Common myeloid progenitor, CD34-positive (primary cell): ENCODE measurements at regions of chr13 and their contacts with region 1.

Region 1: DNA sequence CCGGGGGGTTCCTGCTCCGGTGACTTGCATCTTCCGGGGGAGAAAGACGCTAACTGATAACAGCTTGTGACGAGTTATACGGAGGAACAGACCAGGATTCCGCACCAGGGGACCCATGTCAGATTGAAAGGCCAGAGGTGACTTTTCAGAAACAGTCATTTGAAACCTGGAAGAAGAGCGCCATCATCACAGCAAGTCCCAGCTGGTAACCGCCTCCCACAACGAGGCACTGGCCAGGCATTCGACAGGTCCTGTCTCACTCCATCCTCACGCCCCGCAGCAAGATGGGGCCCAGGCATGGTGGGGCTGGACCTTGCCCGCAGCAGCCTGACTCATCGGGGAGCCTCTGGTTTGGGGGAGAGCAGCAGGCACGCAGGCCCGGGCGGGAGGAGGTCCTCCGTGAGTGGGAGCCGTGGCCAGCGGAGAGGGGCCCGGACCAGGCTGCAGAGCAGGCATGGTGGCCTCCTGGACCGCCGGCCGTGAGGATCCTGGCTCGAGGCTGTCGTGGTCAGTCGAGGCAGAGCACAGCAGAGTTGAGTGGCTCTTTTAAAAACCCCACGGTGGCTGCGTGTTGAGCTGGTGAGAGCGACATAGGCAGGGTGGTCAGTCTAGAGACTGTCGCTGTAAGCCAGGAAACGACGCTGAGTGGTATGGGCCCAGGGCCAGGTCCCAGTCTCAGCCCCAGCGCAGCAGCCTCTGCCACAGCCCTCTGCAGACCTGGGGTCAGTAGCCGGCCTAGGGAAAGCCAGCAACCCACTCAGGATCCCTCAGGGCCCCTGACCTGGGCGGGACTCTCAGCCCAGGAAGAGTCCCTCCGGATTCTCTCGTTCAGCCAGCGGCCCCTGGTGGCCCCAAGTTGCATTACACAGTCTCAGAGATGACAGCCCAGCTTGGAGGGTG is 94.9 kb upstream of the MCF2L start:
- DNase-seq: peak; percentile 74 to 83 (median 81)
- H3K4me3 ChIP-seq: peak overlapping the region in 5 of 7 experiments; percentile 11 to 68 (median 59)
- H3K27ac ChIP-seq: no peak overlapping the region
- H3K4me1 ChIP-seq: peaks cover 0 to 52% (median 32%) of the 10 kb centered on the region in 4 experiments
- H3K27me3 ChIP-seq: no peaks in the 10 kb centered on the region

Region 2: DNA sequence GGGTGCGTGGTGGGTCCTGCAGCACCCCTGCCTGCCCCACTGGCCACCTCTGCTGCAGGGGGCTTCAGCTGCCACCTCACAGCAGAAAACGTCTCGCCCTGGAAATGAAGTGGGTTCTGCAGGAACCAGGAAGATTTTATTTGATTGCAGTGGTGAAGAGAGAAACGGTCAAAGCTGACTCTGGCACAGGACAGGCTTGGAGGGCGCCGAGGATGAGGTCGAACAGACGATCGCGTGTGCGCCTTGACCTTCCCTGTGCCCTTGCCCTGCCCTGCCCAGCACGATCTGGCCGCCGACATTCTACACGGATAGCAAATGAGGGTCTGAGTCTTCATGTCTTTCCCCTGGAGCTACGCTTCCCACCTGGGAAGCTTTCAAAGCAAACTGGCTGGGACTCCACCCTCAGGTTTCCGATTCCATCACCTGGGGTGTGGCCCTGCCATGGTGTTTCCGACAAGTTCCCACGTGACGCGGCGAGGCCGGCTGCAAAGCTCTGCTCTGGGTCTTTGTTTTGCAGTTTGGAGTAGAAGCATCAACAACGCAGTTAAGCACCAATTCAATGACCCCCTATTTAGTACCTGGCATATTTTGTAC is 235.8 kb before region 1 on chr13:
- CTCF ChIA-PET with region 1: interaction called, 26 read pairs
- POLR2A ChIA-PET with region 1: interaction called, 3 read pairs
- DNase-seq: no peak
- H3K4me3 ChIP-seq: peak overlapping the region in 1 of 7 experiments; percentile 36
- H3K27ac ChIP-seq: no peak overlapping the region
- H3K4me1 ChIP-seq: peaks cover 0 to 18% (median 6%) of the 10 kb centered on the region in 4 experiments
- H3K27me3 ChIP-seq: peaks cover 0 to 44% (median 18%) of the 10 kb centered on the region in 5 experiments

Region 3: DNA sequence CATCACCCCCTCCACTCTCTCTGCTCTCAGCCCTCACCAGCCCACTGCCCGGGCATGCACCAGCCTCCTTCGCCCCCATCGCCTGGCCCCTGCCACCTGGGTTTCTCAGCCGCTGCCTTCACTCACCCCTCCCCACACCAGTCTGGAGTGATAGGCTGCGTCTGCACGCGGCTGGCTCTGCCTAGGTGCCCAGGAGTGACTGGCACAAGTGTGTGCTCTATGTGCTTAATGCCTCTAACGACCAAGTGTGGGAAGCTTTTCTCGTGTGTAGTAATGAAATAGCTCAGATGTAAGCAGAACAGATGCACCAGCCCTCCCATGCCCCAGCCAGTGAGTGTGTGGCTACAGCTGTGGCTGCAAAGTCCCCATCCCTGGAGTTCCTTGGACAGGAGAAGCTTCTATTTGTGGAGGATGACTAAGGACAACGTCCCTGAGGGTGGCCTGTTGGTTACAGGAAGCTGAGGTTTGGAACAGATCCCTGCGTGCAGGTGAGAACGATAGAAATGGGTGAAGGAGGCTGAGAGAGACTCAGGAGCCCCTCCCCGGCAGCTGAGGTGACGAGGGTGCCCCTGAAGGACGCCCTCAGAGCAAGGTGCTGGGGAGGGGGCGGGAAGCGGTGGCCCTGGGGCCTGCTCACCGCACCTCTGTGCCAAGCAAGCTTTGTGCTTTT is 148.6 kb before region 1 on chr13:
- CTCF ChIA-PET with region 1: no interaction called
- POLR2A ChIA-PET with region 1: no interaction called
- DNase-seq: peak; percentile 50 to 85 (median 82)
- H3K4me3 ChIP-seq: peak overlapping the region in 5 of 7 experiments; percentile 26 to 51 (median 48)
- H3K27ac ChIP-seq: no peak overlapping the region
- H3K4me1 ChIP-seq: peaks cover 4 to 38% (median 25%) of the 10 kb centered on the region in 4 experiments
- H3K27me3 ChIP-seq: no peaks in the 10 kb centered on the region

Region 4: DNA sequence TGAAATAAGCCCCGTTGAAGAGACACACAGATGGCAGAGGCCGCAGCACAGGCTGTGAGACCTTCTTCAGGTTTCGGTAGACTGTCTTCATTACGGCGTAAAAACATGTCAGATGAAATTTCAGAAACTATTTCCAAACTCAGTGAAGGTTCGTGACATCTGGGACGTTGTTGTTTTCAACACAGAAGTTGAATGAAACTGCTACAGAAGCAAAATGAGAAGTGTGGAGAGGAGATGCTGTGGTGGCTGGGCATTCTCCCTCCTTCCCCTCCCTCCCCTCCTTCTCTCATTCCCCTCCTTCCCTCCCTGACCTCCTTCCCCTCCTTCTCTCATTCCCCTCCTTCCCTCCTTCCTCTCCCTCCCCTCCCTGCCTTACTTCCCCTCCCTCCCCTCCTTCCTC is 70.7 kb before region 1 on chr13:
- CTCF ChIA-PET with region 1: no interaction called
- POLR2A ChIA-PET with region 1: no interaction called
- DNase-seq: peak in 1 of 3 donors; percentile 6
- H3K4me3 ChIP-seq: no peak overlapping the region
- H3K27ac ChIP-seq: no peak overlapping the region
- H3K4me1 ChIP-seq: peaks cover 0 to 10% (median 3%) of the 10 kb centered on the region in 4 experiments
- H3K27me3 ChIP-seq: no peaks in the 10 kb centered on the region

Region 5: DNA sequence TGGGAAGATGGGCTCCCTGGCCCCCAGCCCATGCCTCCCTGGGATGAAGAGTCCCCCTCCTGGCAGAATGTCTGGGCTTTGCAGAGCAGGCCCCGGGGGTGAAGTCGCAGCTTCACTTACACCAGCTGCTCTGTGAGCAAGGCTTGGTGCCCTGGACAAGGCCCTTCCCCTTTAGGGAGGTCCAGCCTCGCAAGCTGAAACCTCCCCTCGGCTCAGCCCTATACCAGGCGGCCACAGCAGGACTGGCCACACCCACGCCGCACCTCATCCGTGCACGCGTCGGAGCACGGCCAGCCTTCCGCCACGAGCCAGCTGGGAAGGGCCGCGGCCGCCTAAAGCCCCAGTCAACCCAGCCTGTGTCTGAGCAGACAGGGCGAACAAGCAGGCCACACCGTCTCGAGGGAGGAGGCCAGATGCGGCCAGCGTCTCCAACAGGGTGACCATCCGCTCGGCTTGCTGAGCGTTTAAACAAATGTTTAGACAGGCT is 11.7 kb after region 1 on chr13:
- CTCF ChIA-PET with region 1: interaction called, 18 read pairs
- POLR2A ChIA-PET with region 1: interaction called, 3 read pairs
- DNase-seq: peak in 2 of 3 donors; percentile 41 to 52
- H3K4me3 ChIP-seq: peak overlapping the region in 2 of 7 experiments; percentile 46 to 51
- H3K27ac ChIP-seq: no peak overlapping the region
- H3K4me1 ChIP-seq: peaks cover 0 to 9% (median 2%) of the 10 kb centered on the region in 4 experiments
- H3K27me3 ChIP-seq: peaks cover 0 to 3% (median 0%) of the 10 kb centered on the region in 5 experiments

Region 6: DNA sequence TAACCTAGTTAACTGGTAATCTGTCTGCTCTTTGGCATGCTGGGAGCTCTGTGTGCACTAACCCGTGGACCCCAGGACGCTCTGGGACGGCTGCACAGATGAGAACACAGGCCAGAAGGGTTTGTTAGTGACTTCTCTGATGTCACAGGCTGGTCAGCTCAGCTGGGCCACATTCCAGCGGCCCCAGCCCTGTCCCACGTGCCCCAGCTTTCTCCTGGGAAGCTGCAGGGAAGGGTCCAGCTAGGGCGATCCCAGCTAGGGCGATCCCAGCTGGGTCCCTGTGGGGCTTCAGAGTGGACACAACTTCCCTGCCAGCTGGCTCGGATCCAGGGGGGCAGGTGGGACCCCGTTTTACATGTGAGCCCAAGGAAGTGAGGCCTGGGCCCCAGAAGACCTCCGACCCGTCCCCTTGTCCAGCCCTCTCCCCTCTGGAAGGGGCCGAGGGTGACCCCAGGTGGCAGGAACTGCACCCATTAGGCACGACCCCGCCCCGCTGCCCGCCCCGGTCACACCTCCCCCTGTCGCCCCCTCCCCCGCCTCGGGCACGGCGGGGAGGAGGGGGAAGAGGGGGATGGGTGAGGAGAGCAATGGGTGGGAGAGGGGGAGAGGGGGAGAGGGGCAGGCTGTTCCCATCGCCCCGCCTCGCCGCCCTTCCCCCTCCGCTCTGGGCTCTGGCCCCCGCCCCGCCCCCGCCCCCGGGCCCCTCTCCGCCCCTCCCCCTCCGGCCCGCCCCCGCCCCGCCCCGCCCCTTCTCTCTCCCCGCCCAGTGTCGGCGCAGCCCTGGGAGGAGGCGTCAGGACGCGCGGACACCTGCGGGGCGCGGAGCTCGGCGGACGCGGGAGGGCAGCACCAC is 19.7 kb after region 1 on chr13:
- CTCF ChIA-PET with region 1: interaction called, 11 read pairs
- POLR2A ChIA-PET with region 1: no interaction called
- DNase-seq: peak; percentile 17 to 53 (median 42)
- H3K4me3 ChIP-seq: peak overlapping the region in 5 of 7 experiments; percentile 19 to 70 (median 49)
- H3K27ac ChIP-seq: no peak overlapping the region
- H3K4me1 ChIP-seq: peaks cover 0 to 31% (median 28%) of the 10 kb centered on the region in 4 experiments
- H3K27me3 ChIP-seq: peaks cover 0 to 20% (median 6%) of the 10 kb centered on the region in 5 experiments

Region 7: GRCh38 chr13:113001241-113002140 is 127.4 kb after region 1 on chr13:
- CTCF ChIA-PET with region 1: no interaction called
- POLR2A ChIA-PET with region 1: no interaction called
- DNase-seq: peak; percentile 50 to 92 (median 88)
- H3K4me3 ChIP-seq: peak overlapping the region in 6 of 7 experiments; percentile 31 to 73 (median 45)
- H3K27ac ChIP-seq: no peak overlapping the region
- H3K4me1 ChIP-seq: peaks cover 0 to 56% (median 42%) of the 10 kb centered on the region in 4 experiments
- H3K27me3 ChIP-seq: peaks cover 0 to 8% (median 0%) of the 10 kb centered on the region in 5 experiments